ENCODE measurements at regions of chr12 and their contacts with region 1.

Region 1: DNA sequence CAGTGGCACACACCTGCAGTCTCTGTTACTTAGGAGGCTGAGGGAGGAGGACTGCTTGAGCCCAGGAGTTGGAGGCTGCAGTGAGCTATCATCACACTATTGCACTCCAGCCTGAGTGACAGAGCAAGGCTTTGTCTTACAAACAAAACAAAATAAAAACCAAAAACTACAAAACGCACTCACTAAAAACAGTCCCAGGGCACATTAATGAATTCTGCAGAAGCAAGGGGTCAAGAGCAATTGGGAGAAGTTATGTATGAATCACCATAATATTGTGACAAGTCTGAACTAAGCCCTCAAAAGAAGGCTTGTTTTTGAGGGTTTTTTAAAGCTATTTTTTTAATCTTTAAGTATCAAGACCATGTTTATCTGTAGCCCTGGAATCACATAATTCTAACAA is 201.1 kb downstream of the MED13L start:
- DNase-seq: no peak
- H3K4me3 ChIP-seq: no peak overlapping the region
- H3K27ac ChIP-seq: no peak overlapping the region
- H3K4me1 ChIP-seq: no peaks in the 10 kb centered on the region
- H3K27me3 ChIP-seq: no peaks in the 10 kb centered on the region
- CTCF ChIP-seq: no peak

Region 2: DNA sequence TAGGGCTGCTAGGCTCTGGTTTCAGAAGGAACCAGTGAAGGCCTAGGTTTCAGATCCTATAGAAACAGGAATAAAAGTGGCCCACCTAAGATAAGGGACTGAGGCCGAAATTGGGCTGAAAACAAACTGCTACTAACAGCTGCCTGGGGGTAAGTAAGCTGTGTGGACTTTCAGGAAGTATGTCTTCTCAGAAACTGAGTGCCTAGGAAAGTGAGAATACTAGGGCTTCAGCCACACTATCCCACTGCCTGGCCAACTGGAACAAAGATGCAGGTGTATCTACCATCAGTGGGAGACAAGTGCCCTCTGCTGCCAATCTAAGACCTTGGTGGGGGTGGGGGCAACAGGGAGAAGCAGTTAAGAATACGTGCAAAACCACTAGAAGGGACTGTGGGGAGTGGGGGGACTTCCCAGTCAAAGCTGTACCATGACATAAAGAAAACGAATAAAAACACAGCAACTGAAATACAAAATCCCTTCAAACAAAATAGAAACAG is 118.6 kb after region 1 on chr12:
- CTCF ChIA-PET with region 1: no interaction called
- POLR2A ChIA-PET with region 1: no interaction called
- intact Hi-C with region 1: no loop called
- DNase-seq: no peak
- H3K4me3 ChIP-seq: no peak overlapping the region
- H3K27ac ChIP-seq: no peak overlapping the region; the same call in 1 of the 2 replicates
- H3K4me1 ChIP-seq: no peaks in the 10 kb centered on the region
- H3K27me3 ChIP-seq: no peaks in the 10 kb centered on the region
- CTCF ChIP-seq: no peak

Region 3: DNA sequence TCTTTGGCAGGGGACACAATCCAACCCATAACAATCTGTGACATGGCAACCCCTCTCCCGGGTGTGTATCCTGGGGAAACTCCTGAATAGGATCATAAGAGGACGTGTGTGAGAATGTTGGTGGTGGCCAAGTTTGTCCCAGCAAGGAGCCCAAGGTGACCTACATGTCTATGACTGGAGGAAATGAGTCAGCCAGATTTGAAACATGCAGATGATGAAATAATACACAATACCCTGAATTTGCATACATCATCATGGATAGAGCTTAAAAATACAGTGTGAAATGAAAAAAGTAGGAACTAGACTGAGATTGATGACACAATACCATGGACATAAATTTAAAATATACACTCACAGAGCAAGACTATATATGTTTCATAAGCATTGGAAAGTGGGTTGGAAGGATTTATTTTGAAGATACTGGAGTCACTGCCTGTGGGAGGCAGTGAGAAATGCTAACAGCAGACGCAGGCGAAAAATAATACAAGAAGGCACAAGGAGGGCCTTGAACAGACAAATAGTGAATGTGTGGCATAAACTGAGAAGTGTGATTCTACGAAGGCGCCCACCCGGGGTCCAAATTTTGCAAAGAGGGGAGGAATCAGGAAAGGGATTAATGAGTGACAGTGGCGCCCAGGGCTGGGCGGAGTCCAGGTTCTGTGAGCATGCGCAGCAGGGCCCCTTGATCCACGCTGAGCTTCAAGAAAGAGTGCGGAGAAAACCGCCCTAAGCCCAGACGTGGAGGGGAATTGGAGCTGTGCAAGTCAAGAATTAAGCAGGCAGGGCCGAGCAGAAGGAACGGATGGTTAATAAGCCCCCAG is 475.8 kb after region 1 on chr12:
- CTCF ChIA-PET with region 1: interaction called, 15 read pairs
- POLR2A ChIA-PET with region 1: no interaction called
- intact Hi-C with region 1: no loop called
- DNase-seq: no peak
- H3K4me3 ChIP-seq: no peak overlapping the region
- H3K27ac ChIP-seq: no peak overlapping the region
- H3K4me1 ChIP-seq: no peaks in the 10 kb centered on the region
- H3K27me3 ChIP-seq: no peaks in the 10 kb centered on the region
- CTCF ChIP-seq: no peak

Measured in PC-9 (cell line).